B cell (primary cell): ENCODE measurements at regions of chr4 and their contacts with region 1.

Region 1: DNA sequence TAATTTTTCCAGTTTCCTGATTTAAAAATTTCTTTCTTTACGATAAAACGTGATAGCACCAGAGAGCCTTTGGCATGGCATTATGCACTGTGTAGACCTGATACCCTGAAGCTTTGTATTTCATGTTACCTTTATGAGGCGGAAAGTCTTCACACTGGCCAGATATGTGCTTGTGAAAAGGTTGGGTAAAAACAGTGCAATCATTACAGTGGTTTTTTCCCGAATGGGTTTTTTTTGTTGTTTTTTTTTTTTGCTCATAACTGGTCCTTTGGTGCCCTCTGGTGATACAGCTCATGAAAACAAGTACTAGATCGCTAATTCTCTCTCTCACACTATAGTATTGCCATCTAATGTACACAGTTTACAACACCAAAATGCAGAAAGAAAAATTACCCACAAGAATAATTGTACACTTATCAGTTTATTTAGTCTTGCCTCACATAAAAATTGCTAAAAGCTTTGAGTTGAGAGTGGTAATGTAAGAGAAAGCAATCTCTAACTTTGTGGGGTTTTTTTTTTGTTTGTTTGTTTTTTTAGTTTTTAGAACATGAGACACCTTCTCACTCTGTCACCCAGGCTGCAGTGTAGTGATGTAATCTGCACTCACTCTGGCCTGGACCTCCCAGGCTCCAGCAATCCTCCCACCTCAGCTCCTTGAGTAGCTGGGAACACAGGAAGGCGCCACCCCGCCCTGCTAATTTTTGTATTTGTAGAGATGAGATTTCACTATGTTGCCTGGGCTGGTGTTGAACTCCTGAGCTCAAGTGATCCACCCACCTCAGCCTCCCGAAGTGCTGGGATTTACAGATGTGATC is 21.3 kb downstream of the SPCS3 start:
- DNase-seq: peak; percentile 60
- ATAC-seq: peak; percentile 49
- H3K4me3 ChIP-seq: no peak overlapping the region
- H3K4me3 Mint-ChIP-seq: no peak overlapping the region
- H3K27ac ChIP-seq: no peak overlapping the region
- H3K27ac Mint-ChIP-seq: no peak overlapping the region
- H3K4me1 ChIP-seq: no peaks in the 10 kb centered on the region
- H3K4me1 Mint-ChIP-seq: peaks cover 3% of the 10 kb centered on the region
- H3K27me3 ChIP-seq: no peaks in the 10 kb centered on the region
- H3K27me3 Mint-ChIP-seq: no peaks in the 10 kb centered on the region
- CTCF ChIP-seq: peak; percentile 80

Region 2: GRCh38 chr4:175947117-175947722 is 393.9 kb before region 1 on chr4:
- CTCF ChIA-PET with region 1: interaction called, 30 read pairs
- POLR2A ChIA-PET with region 1: no interaction called
- intact Hi-C with region 1: loop called (anchors 1 kb)
- DNase-seq: peak; percentile 41
- ATAC-seq: no peak
- H3K4me3 ChIP-seq: no peak overlapping the region
- H3K4me3 Mint-ChIP-seq: no peak overlapping the region
- H3K27ac ChIP-seq: no peak overlapping the region
- H3K27ac Mint-ChIP-seq: no peak overlapping the region
- H3K4me1 ChIP-seq: peaks cover 5 to 7% of the 10 kb centered on the region in 2 donors
- H3K4me1 Mint-ChIP-seq: peaks cover 6% of the 10 kb centered on the region
- H3K27me3 ChIP-seq: no peaks in the 10 kb centered on the region
- H3K27me3 Mint-ChIP-seq: peaks cover 4% of the 10 kb centered on the region
- CTCF ChIP-seq: peak; percentile 91

Region 3: GRCh38 chr4:176034499-176034898 is 306.6 kb before region 1 on chr4:
- CTCF ChIA-PET with region 1: interaction called, 63 read pairs
- POLR2A ChIA-PET with region 1: no interaction called
- intact Hi-C with region 1: loop called (anchors 1 kb)
- DNase-seq: peak; percentile 53
- ATAC-seq: no peak
- H3K4me3 ChIP-seq: no peak overlapping the region
- H3K4me3 Mint-ChIP-seq: no peak overlapping the region
- H3K27ac ChIP-seq: no peak overlapping the region
- H3K27ac Mint-ChIP-seq: no peak overlapping the region
- H3K4me1 ChIP-seq: peaks cover 0 to 7% of the 10 kb centered on the region in 2 donors
- H3K4me1 Mint-ChIP-seq: peaks cover 2% of the 10 kb centered on the region
- H3K27me3 ChIP-seq: no peaks in the 10 kb centered on the region
- H3K27me3 Mint-ChIP-seq: no peaks in the 10 kb centered on the region
- CTCF ChIP-seq: peak; percentile 53

Region 4: GRCh38 chr4:176150356-176150682 is 190.8 kb before region 1 on chr4:
- CTCF ChIA-PET with region 1: interaction called, 21 read pairs
- POLR2A ChIA-PET with region 1: no interaction called
- intact Hi-C with region 1: loop called (anchors 1 kb)
- DNase-seq: peak; percentile 10
- ATAC-seq: no peak
- H3K4me3 ChIP-seq: no peak overlapping the region
- H3K4me3 Mint-ChIP-seq: no peak overlapping the region
- H3K27ac ChIP-seq: no peak overlapping the region
- H3K27ac Mint-ChIP-seq: no peak overlapping the region
- H3K4me1 ChIP-seq: no peaks in the 10 kb centered on the region
- H3K4me1 Mint-ChIP-seq: no peaks in the 10 kb centered on the region
- H3K27me3 ChIP-seq: no peaks in the 10 kb centered on the region
- H3K27me3 Mint-ChIP-seq: no peaks in the 10 kb centered on the region
- CTCF ChIP-seq: no peak

Region 5: GRCh38 chr4:176319704-176320339 is 21.3 kb before region 1 on chr4 and contains the start of gene SPCS3:
- CTCF ChIA-PET with region 1: interaction called, 5 read pairs
- POLR2A ChIA-PET with region 1: no interaction called
- intact Hi-C with region 1: loop called (anchors 2 kb)
- DNase-seq: peak; percentile 97
- ATAC-seq: peak; percentile 91
- H3K4me3 ChIP-seq: peak within 1 kb of the TSS; percentile 77 to 91 (median 84)
- H3K4me3 Mint-ChIP-seq: peak within 1 kb of the TSS; percentile 93
- H3K27ac ChIP-seq: peak within 1 kb of the TSS; percentile 84 to 95
- H3K27ac Mint-ChIP-seq: peak within 1 kb of the TSS; percentile 97
- H3K4me1 ChIP-seq: peaks cover 21 to 44% of the 10 kb centered on the region in 2 donors
- H3K4me1 Mint-ChIP-seq: peaks cover 43% of the 10 kb centered on the region
- H3K27me3 ChIP-seq: no peaks in the 10 kb centered on the region
- H3K27me3 Mint-ChIP-seq: no peaks in the 10 kb centered on the region
- CTCF ChIP-seq: no peak
- total RNA-seq, gene SPCS3: 92.4 and 102 TPM in 2 replicates